PC-3 (cell line): ENCODE measurements at regions of chr5 and their contacts with region 1.

Region 1: GRCh38 chr5:150560401-150561193 is 52.7 kb downstream of the NDST1 start:
- DNase-seq: peak; percentile 95
- ATAC-seq: peak; percentile 89
- H3K4me3 ChIP-seq: no peak overlapping the region
- H3K27ac ChIP-seq: no peak overlapping the region
- H3K4me1 ChIP-seq: peaks cover 7% of the 10 kb centered on the region; the same call in 1 of the 2 replicates
- H3K27me3 ChIP-seq: no peaks in the 10 kb centered on the region
- CTCF ChIP-seq: peak; percentile 79

Region 2: GRCh38 chr5:150486402-150487198 is 74.0 kb before region 1 on chr5:
- CTCF ChIA-PET with region 1: no interaction called
- POLR2A ChIA-PET with region 1: no interaction called
- intact Hi-C with region 1: no loop called
- DNase-seq: peak; percentile 81
- ATAC-seq: peak; percentile 33
- H3K4me3 ChIP-seq: peak overlapping the region; percentile 95
- H3K27ac ChIP-seq: peak overlapping the region; percentile 62
- H3K4me1 ChIP-seq: peaks cover 42% of the 10 kb centered on the region
- H3K27me3 ChIP-seq: no peaks in the 10 kb centered on the region
- CTCF ChIP-seq: no peak

Region 3: GRCh38 chr5:150640311-150641005 is 79.9 kb after region 1 on chr5 and contains the start of gene SYNPO:
- CTCF ChIA-PET with region 1: no interaction called
- POLR2A ChIA-PET with region 1: interaction called, 3 read pairs
- intact Hi-C with region 1: loop called (anchors 1 kb)
- DNase-seq: peak; percentile 94
- ATAC-seq: peak; percentile 17
- H3K4me3 ChIP-seq: peak within 1 kb of the TSS; percentile 64
- H3K27ac ChIP-seq: peak within 1 kb of the TSS; percentile 92
- H3K4me1 ChIP-seq: peaks cover 93% of the 10 kb centered on the region
- H3K27me3 ChIP-seq: no peaks in the 10 kb centered on the region
- CTCF ChIP-seq: peak; percentile 29
- total RNA-seq, gene SYNPO: 5.3 and 8.4 TPM in 2 replicates

Region 4: DNA sequence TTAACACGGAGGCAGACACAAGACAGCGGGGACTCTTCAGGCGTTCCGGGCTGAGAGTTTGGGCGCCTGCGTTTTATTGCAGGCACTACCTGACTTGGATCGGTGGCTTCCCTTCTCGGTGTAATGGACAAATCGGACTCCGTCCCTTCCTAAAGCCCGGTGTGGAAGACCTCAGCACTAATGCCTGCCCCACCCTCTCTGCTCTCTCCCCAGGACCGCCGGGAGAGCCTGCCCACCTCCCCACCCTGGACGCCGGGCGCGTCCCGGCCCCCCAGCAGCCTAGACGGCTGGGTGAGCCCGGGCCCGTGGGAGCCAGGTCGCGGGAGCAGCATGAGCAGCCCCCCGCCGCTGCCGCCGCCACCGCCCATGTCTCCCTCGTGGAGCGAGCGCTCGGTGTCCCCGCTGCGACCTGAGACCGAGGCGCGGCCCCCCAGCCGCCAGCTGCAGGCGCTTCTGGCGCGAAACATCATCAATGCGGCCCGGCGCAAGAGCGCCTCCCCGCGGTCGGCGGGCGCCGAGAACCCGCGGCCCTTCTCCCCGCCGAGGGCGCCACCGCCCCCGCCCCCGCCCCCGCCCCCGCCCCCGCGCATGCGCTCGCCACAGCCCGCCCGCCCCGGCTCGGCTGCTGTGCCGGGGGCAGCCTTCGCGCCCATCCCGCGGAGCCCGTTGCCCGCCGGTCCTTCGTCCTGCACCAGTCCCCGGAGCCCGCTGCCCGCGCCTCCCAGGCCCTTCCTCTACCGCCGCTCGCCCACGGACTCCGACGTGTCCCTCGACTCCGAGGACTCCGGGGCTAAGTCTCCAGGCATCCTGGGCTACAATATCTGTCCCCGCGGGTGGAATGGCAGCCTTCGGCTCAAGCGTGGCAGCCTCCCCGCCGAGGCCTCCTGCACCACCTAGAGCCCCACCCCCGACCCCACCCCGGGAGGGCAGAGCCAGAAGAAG is 95.9 kb after region 1 on chr5:
- CTCF ChIA-PET with region 1: interaction called, 4 read pairs
- POLR2A ChIA-PET with region 1: no interaction called
- intact Hi-C with region 1: loop called (anchors 1 kb)
- DNase-seq: peak; percentile 78
- ATAC-seq: peak; percentile 76
- H3K4me3 ChIP-seq: peak overlapping the region; percentile 73
- H3K27ac ChIP-seq: no peak overlapping the region
- H3K4me1 ChIP-seq: peaks cover 6% of the 10 kb centered on the region; the same call in 1 of the 2 replicates
- H3K27me3 ChIP-seq: no peaks in the 10 kb centered on the region
- CTCF ChIP-seq: peak; percentile 56

Region 5: DNA sequence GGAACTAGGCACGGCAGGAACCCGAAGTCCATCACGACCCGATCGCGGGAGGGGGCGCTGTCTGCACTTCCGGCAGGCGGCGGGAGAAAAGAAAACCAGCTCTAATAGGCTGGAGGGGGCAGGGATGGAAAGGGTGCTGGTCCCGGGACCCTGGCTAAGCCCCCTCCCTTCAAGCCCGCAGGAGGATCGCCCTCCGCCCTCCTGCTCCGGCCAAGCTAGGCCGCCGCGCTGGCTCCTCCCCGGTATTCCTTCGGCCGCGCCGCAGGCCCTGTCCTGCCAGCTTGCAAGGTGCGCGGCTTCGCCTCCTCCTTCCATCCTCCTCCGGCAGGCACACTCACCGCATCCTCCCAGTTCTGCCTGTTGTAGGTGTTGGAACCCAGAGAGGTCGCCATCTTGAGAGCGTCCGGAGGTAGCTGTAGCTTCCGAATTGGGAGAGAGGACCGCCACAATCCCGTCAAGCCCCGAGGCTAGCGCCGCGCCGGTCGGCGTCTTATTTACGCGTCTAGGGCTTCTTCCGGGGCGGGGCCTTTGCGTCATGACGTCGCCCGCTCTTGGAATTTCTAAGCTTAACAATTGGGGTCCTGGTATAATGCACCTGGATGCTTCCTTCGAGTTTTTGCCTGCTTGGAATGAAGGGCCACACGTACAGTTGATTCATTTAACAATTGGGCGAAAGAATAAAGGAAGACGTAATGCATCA is 140.1 kb after region 1 on chr5 and contains the start of gene RBM22:
- CTCF ChIA-PET with region 1: interaction called, 5 read pairs
- POLR2A ChIA-PET with region 1: no interaction called
- intact Hi-C with region 1: loop called (anchors 2 kb)
- DNase-seq: peak; percentile 93
- ATAC-seq: peak; percentile 92
- H3K4me3 ChIP-seq: peak within 1 kb of the TSS; percentile 88
- H3K27ac ChIP-seq: peak within 1 kb of the TSS; percentile 52
- H3K4me1 ChIP-seq: peaks cover 17% of the 10 kb centered on the region
- H3K27me3 ChIP-seq: no peaks in the 10 kb centered on the region
- CTCF ChIP-seq: peak; percentile 75
- total RNA-seq, gene RBM22: 27.3 and 31.6 TPM in 2 replicates

Region 6: GRCh38 chr5:150778517-150779396 is 218.2 kb after region 1 on chr5 and contains the start of gene SMIM3:
- CTCF ChIA-PET with region 1: no interaction called
- POLR2A ChIA-PET with region 1: no interaction called
- intact Hi-C with region 1: loop called (anchors 5 kb)
- DNase-seq: peak; percentile 72
- ATAC-seq: peak; percentile 76
- H3K4me3 ChIP-seq: peak within 1 kb of the TSS; percentile 91
- H3K27ac ChIP-seq: no peak within 1 kb of the TSS
- H3K4me1 ChIP-seq: peaks cover 59% of the 10 kb centered on the region
- H3K27me3 ChIP-seq: no peaks in the 10 kb centered on the region
- CTCF ChIP-seq: peak; percentile 63
- total RNA-seq, gene SMIM3: 11.3 and 15.6 TPM in 2 replicates

Region 7: DNA sequence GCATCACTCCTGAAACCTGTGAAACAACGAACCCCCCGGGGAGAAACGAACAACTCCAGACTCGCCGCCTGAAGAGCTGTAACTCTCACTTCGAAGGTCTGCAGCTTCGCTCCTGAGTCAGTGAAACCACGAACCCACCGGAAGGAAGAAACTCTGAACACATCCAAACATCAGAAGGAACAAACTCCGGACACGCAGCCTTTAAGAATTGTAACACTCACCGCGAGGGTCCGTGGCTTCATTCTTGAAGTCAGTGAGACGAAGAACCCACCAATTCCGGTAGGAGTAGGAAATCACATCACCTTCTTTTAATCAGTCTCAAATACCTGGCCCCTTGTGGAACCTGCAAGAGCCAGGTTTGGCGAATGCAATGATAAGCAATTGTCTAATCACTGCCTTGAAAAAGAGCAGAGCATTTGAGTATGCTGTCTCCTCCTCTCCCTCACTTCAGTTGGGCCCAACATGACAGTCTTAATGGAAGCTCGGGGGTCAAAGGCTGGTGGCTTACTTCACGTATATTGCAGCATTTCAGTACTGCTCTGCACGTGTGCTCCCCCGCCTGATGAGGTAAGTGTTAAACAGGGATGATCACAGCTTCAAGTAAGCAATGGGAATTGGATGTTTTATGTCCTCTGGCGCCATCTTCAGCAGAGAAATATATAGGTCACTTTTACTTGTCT is 286.2 kb after region 1 on chr5:
- CTCF ChIA-PET with region 1: no interaction called
- POLR2A ChIA-PET with region 1: no interaction called
- intact Hi-C with region 1: loop called (anchors 1 kb)
- DNase-seq: peak; percentile 79
- ATAC-seq: peak; percentile 91
- H3K4me3 ChIP-seq: no peak overlapping the region
- H3K27ac ChIP-seq: no peak overlapping the region
- H3K4me1 ChIP-seq: no peaks in the 10 kb centered on the region
- H3K27me3 ChIP-seq: no peaks in the 10 kb centered on the region
- CTCF ChIP-seq: peak; percentile 87

Region 8: DNA sequence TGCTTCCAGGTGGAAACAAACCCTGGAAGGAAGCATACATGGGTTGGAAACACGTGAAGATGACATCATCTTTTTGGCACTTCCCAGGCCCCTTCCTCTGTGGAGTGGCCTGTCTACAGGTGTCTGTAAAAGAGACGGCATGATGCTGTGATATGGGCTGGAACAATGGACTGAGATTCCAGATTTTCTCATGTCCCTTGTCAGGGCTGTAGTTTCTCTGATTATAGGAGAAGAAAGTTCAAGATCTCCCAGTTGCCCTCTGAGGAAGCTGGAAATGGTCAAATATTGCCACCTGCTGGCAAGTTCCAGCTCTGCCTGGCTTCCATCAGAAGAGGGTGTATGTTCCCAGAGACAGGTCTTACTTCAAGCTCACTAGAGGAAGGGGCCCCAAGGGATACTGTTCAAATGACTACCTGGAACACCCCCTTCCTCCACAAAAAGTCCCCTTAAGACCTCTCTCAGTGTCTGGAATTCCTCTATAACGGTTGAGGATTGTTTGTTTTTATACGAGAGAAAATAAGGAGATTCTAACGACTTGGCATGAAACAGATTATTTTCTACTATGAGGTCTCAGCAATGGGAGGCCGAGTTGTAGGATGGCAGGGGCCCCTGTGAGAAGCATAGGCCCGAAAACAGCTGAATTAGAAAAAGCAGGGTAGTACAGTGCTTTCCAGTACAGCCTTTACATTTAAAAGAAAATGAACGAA is 604.2 kb after region 1 on chr5:
- CTCF ChIA-PET with region 1: no interaction called
- POLR2A ChIA-PET with region 1: no interaction called
- intact Hi-C with region 1: loop called (anchors 5 kb)
- DNase-seq: peak; percentile 90
- ATAC-seq: peak; percentile 99
- H3K4me3 ChIP-seq: no peak overlapping the region
- H3K27ac ChIP-seq: no peak overlapping the region
- H3K4me1 ChIP-seq: no peaks in the 10 kb centered on the region
- H3K27me3 ChIP-seq: no peaks in the 10 kb centered on the region
- CTCF ChIP-seq: peak; percentile 96